ENCODE measurements at regions of chr17 and their contacts with region 1.

Region 1: DNA sequence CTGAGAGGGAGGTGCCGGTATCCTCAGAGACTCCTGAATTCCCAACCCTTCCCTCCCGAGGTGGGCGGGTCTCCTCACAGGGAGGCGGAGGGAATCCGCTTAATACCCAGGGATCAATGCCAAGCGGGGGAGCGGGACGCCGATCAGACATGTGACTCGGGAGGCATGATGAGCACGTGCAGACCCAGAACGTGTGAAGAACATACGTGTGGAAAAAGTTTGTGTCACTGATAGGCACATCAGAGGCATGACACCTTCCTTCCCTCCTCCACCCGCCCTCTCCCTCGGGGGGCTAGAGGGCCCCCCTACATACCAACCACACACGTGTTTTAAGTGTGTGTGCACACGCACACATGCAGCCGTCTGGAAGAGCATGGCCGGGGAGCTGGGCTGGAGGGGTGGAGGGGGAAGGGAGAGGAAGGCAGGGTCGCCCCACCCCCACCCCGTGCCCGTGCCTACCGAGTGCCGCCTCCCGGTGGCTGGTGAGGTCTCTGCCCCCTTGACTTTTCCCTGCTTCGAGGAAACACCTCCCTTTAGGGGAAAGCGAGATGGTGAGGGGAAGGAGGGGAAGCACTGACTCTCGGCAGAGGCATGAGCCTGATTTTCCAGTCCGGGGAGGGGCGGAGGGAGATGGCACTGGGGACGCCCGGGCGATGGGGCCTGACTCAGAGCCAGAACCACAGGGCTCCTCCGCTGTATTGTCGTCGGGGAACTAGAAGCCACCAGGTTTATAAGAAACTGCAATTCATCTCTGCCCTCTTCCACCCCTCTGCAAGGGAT is 12.1 kb upstream of the TBX21 start:
- DNase-seq: peak; percentile 99
- H3K4me3 Mint-ChIP-seq: peak overlapping the region; percentile 72
- H3K27ac Mint-ChIP-seq: peak overlapping the region; percentile 94
- H3K4me1 Mint-ChIP-seq: peaks cover 92% of the 10 kb centered on the region
- H3K27me3 Mint-ChIP-seq: no peaks in the 10 kb centered on the region

Region 2: DNA sequence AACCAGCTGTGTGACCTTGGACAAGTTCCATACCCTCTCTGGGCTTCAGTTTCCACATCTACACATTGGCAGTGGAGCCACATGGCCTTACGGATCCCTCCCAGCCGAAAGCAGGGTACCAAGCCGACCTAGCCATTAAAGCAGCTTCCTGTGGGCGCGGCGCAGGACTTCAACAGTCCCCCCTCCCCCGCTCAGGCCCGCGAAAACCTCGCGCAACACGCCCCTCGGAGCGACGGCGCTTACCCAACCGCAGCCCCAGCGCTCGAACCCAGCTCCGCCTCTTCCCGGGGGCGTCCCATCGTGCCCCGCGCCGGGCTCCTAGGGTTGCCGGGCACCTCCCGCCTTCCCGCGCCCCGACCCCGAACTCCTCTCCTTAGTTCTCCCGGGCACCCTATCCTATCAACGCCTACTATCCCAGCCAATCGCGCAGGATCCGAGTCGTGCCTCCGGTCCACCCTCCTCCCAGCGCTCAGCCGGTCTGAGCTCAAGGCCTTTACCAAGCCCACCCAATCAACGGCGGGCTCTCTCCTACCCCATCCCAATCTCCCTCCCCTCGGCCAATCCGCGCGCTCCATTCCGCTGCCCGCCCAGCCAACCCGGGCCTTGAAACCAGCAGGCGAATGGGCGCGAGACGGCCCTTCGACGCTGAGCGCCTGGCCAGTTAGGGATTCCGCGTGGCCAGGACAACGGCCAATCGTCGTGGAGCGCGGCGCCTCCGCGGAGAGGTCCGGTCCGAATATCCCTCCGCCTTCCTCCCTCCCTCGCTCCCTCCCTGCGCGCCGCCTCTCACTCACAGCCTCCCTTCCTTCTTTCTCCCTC is 71.6 kb before region 1 on chr17 and contains the start of gene KPNB1:
- CTCF ChIA-PET with region 1: no interaction called
- POLR2A ChIA-PET with region 1: interaction called, 12 read pairs
- intact Hi-C with region 1: loop called (anchors 1 kb)
- DNase-seq: peak; percentile 100
- H3K4me3 Mint-ChIP-seq: peak within 1 kb of the TSS; percentile 92
- H3K27ac Mint-ChIP-seq: peak within 1 kb of the TSS; percentile 98
- H3K4me1 Mint-ChIP-seq: peaks cover 44% of the 10 kb centered on the region
- H3K27me3 Mint-ChIP-seq: no peaks in the 10 kb centered on the region
- total RNA-seq, gene KPNB1: 475 to 488 TPM

Region 3: DNA sequence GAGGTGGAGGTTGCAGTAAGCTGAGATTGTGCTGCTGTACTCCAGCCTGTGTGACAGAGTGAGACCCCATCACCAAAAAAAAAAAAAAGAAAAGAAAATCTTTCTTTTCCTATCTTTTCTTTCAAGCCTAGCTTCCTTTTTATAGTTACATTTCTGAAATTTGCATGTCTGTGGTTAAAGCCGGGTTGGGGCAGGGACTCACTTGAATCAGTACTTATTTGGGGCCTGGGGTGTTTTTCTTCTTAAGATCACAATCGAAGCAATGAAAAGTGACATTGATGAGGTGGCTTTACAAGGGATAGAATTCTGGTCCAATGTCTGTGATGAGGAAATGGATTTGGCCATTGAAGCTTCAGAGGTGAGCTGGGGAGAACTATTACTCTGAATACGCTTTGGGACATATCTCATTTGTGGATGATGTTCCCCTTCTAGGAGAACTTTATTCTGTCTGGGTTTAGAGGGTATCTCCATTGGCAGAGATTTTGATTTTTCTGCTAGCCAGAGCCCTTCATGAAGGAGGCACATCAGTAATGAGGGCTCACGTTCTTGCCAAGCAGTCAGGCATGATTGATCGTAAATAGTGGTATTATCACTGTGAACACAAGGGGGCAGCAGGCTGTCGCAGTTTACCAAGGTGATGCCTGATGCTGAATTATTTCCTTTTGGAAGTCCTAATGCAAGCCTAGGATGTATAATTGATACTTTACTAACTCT is 56.9 kb before region 1 on chr17:
- CTCF ChIA-PET with region 1: interaction called, 13 read pairs
- POLR2A ChIA-PET with region 1: no interaction called
- intact Hi-C with region 1: no loop called
- DNase-seq: peak; percentile 71
- H3K4me3 Mint-ChIP-seq: no peak overlapping the region
- H3K27ac Mint-ChIP-seq: peak overlapping the region; percentile 80
- H3K4me1 Mint-ChIP-seq: peaks cover 31% of the 10 kb centered on the region
- H3K27me3 Mint-ChIP-seq: no peaks in the 10 kb centered on the region

Region 4: DNA sequence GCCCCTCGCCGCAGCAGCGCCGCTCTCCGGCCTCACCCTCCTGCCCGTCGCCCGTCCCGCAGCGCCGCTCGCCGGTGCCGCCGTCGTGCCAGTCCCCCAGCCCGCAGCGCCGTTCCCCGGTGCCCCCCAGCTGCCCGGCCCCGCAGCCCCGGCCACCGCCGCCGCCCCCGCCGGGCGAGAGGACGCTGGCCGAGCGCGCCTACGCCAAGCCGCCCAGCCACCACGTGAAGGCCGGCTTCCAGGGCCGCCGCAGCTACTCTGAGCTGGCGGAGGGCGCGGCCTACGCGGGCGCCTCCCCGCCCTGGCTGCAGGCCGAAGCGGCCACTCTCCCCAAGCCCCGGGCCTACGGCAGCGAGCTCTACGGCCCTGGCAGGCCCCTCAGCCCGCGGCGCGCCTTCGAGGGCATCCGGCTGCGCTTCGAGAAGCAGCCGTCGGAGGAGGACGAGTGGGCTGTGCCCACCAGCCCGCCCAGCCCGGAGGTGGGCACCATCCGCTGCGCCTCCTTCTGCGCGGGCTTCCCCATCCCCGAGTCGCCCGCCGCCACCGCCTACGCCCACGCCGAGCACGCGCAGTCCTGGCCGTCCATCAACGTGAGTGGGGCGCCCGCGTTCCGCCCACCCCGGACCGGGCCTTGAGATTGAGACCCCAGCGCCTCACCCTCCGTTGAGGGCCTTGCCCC is 11.9 kb before region 1 on chr17:
- CTCF ChIA-PET with region 1: interaction called, 59 read pairs
- POLR2A ChIA-PET with region 1: interaction called, 111 read pairs
- intact Hi-C with region 1: loop called (anchors 1 kb)
- DNase-seq: no peak
- H3K4me3 Mint-ChIP-seq: no peak overlapping the region
- H3K27ac Mint-ChIP-seq: no peak overlapping the region
- H3K4me1 Mint-ChIP-seq: peaks cover 62% of the 10 kb centered on the region
- H3K27me3 Mint-ChIP-seq: no peaks in the 10 kb centered on the region

Region 5: GRCh38 chr17:47733047-47733673 is 12.2 kb after region 1 on chr17 and contains the start of gene TBX21:
- CTCF ChIA-PET with region 1: interaction called, 57 read pairs
- POLR2A ChIA-PET with region 1: interaction called, 29 read pairs
- intact Hi-C with region 1: loop called (anchors 1 kb)
- DNase-seq: peak; percentile 94
- H3K4me3 Mint-ChIP-seq: peak within 1 kb of the TSS; percentile 100
- H3K27ac Mint-ChIP-seq: peak within 1 kb of the TSS; percentile 93
- H3K4me1 Mint-ChIP-seq: peaks cover 69% of the 10 kb centered on the region
- H3K27me3 Mint-ChIP-seq: no peaks in the 10 kb centered on the region
- total RNA-seq, gene TBX21: 57.7 to 58.2 TPM

Region 6: GRCh38 chr17:47821424-47822391 is 100.8 kb after region 1 on chr17 and contains the start of gene OSBPL7:
- CTCF ChIA-PET with region 1: no interaction called
- POLR2A ChIA-PET with region 1: no interaction called
- intact Hi-C with region 1: loop called (anchors 10 kb)
- DNase-seq: peak; percentile 88
- H3K4me3 Mint-ChIP-seq: peak within 1 kb of the TSS; percentile 92
- H3K27ac Mint-ChIP-seq: peak within 1 kb of the TSS; percentile 72
- H3K4me1 Mint-ChIP-seq: peaks cover 26% of the 10 kb centered on the region
- H3K27me3 Mint-ChIP-seq: no peaks in the 10 kb centered on the region
- total RNA-seq, gene OSBPL7: 14.7 to 15.6 TPM

Region 7: DNA sequence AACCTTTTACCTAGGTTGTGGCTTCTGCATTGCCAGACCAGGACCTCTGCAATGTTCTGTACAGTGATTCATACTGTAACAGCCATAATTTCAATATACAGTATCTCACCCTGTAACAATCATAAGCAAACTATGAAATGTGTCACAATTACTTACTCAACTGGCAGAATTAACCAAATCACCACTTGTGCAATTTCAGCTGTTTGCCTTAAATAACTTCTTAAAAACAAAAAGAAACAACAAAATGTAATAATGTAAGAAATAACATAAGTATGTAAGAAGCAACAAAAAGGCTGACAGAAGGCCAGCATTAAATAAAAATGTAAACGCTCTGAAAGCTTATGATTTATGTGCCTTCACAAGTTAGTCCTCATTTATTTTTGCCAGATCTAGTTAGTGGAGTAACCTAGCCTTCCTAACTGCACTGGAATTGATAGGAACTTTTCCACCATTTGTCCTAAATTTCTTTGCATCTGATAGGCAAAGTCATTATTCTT is 612.1 kb after region 1 on chr17:
- CTCF ChIA-PET with region 1: no interaction called
- POLR2A ChIA-PET with region 1: no interaction called
- intact Hi-C with region 1: no loop called
- DNase-seq: no peak
- H3K4me3 Mint-ChIP-seq: no peak overlapping the region
- H3K27ac Mint-ChIP-seq: no peak overlapping the region
- H3K4me1 Mint-ChIP-seq: peaks cover 13% of the 10 kb centered on the region
- H3K27me3 Mint-ChIP-seq: no peaks in the 10 kb centered on the region